GM12878 (cell line): ENCODE measurements at regions of chr3 and their contacts with region 1.

Region 1: DNA sequence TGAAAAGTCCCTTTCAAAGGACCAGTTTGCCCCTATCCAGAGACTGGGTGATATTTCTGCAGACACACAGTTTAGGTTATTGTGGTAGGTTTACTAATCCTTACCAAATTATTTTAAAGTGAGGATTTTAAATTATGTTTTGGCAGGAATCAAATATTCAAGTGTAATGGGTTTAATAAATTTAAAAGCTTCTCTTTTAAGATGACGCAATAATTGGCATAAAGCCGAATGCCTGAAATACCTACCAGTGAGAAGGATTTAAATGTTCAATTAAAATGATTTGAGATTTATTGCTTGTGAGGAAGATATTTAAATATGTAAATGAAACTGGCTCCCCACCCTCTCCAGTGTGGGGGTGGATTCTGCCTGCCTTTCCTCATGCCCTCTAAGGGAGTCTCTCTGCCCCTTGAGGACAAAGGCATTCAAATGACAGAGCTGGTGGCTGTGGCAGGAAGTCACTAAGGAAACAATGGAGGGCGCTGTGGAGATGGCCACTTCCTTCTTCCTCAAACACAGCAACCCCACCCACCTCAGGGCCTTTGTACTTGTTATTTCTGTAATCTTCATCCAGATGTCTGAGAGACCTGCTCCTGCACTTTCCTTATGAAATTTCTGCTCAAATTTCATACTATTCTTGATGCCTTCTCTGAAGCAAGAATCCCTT is 131.7 kb downstream of the TNIK start:
- DNase-seq: no peak
- ATAC-seq: peak; percentile 60
- H3K4me3 ChIP-seq: no peak overlapping the region
- H3K27ac ChIP-seq: peak overlapping the region; percentile 6
- H3K4me1 ChIP-seq: peaks cover 38% of the 10 kb centered on the region
- H3K27me3 ChIP-seq: no peaks in the 10 kb centered on the region
- CTCF ChIP-seq: peak; percentile 27 to 36 (median 28); a peak in 4 of 6 replicates
- EP300 ChIP-seq: no peak
- POLR2A ChIP-seq: no peak
- RAD21 ChIP-seq: no peak

Region 2: DNA sequence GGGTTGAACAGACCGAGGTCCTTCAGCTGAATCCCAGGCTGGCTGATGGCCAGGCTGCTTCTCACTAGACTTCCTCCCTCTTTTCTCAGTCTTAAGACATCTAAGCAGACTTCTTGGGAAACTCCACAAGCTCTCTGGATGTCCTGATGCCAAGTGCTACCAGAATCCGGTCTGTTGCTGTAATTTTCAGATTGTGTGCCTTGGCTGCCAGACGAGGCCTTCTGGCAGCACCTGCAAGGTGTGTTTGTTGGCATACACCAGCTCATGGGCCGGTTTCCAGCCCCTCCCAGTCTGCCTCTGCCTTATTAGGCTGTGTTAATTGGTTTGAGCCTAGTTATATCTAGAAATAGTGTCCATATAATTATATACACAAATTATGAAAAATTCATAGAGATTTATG is 11.0 kb after region 1 on chr3:
- CTCF ChIA-PET with region 1: interaction called, 8 read pairs
- POLR2A ChIA-PET with region 1: interaction called, 9 read pairs
- RAD21 ChIA-PET with region 1: interaction called, 7 read pairs
- SMC1A ChIA-PET with region 1: interaction called, 89 read pairs
- in situ Hi-C with region 1: no loop called
- intact Hi-C with region 1: no loop called
- DNase-seq: no peak
- ATAC-seq: no peak
- H3K4me3 ChIP-seq: no peak overlapping the region
- H3K27ac ChIP-seq: no peak overlapping the region; the same call in 1 of the 2 replicates
- H3K4me1 ChIP-seq: peaks cover 29% of the 10 kb centered on the region
- H3K27me3 ChIP-seq: no peaks in the 10 kb centered on the region
- CTCF ChIP-seq: no peak
- EP300 ChIP-seq: no peak
- POLR2A ChIP-seq: no peak
- RAD21 ChIP-seq: no peak

Region 3: GRCh38 chr3:171375666-171376595 is 47.4 kb after region 1 on chr3:
- CTCF ChIA-PET with region 1: no interaction called
- POLR2A ChIA-PET with region 1: no interaction called
- RAD21 ChIA-PET with region 1: no interaction called
- SMC1A ChIA-PET with region 1: no interaction called
- in situ Hi-C with region 1: no loop called
- intact Hi-C with region 1: no loop called
- DNase-seq: no peak
- ATAC-seq: peak; percentile 69
- H3K4me3 ChIP-seq: no peak overlapping the region
- H3K27ac ChIP-seq: peak overlapping the region; percentile 22; the same call in 1 of the 2 replicates
- H3K4me1 ChIP-seq: peaks cover 37% of the 10 kb centered on the region
- H3K27me3 ChIP-seq: no peaks in the 10 kb centered on the region
- CTCF ChIP-seq: no peak
- EP300 ChIP-seq: no peak
- POLR2A ChIP-seq: no peak
- RAD21 ChIP-seq: no peak

Region 4: DNA sequence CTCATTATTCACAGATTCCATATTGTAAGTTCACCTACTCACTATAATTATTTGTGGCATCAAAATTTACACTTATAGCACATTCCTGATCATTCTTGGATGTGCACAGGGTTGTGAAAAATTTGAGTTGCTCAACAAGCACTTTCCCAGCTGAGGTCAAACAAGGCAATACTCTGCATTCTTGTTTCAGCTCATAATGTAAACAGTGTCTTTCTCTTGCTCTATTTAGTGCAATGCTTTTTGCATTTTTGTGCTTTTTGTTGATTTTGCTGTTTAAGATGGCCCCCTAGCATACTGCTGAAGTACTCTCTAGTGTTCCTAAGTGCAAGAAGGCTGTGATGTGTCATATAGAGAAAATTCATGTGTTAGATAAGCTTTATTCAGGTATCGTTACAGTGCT is 198.3 kb after region 1 on chr3:
- CTCF ChIA-PET with region 1: no interaction called
- POLR2A ChIA-PET with region 1: no interaction called
- RAD21 ChIA-PET with region 1: no interaction called
- SMC1A ChIA-PET with region 1: no interaction called
- in situ Hi-C with region 1: no loop called
- intact Hi-C with region 1: no loop called
- DNase-seq: no peak
- ATAC-seq: no peak
- H3K4me3 ChIP-seq: no peak overlapping the region
- H3K27ac ChIP-seq: no peak overlapping the region
- H3K4me1 ChIP-seq: no peaks in the 10 kb centered on the region
- H3K27me3 ChIP-seq: no peaks in the 10 kb centered on the region
- CTCF ChIP-seq: no peak
- EP300 ChIP-seq: no peak
- POLR2A ChIP-seq: no peak
- RAD21 ChIP-seq: no peak